WTC11 (cell line): ENCODE measurements at regions of chr1 and their contacts with region 1.

Region 1: GRCh38 chr1:156060937-156061636 is at the start of gene RAB25:
- DNase-seq: peak; percentile 80
- ATAC-seq: peak; percentile 83
- H3K4me3 Mint-ChIP-seq: peak within 1 kb of the TSS; percentile 90
- H3K27ac Mint-ChIP-seq: peak within 1 kb of the TSS; percentile 98
- H3K4me1 Mint-ChIP-seq: peaks cover 37% of the 10 kb centered on the region
- H3K27me3 Mint-ChIP-seq: no peaks in the 10 kb centered on the region
- CTCF ChIP-seq: no peak
- total RNA-seq, gene RAB25: 61.9 to 82.8 TPM (median 82.5 TPM) in 3 replicates

Region 2: GRCh38 chr1:155920717-155921116 is 140.4 kb before region 1 on chr1:
- CTCF ChIA-PET with region 1: no interaction called
- POLR2A ChIA-PET with region 1: no interaction called
- DNase-seq: no peak
- ATAC-seq: no peak
- H3K4me3 Mint-ChIP-seq: no peak overlapping the region
- H3K27ac Mint-ChIP-seq: no peak overlapping the region
- H3K4me1 Mint-ChIP-seq: no peaks in the 10 kb centered on the region
- H3K27me3 Mint-ChIP-seq: no peaks in the 10 kb centered on the region
- CTCF ChIP-seq: no peak

Region 3: GRCh38 chr1:155978325-155978972 is 82.6 kb before region 1 on chr1 and contains the start of gene ARHGEF2:
- CTCF ChIA-PET with region 1: interaction called, 73 read pairs
- POLR2A ChIA-PET with region 1: interaction called, 10 read pairs
- DNase-seq: peak; percentile 91
- ATAC-seq: peak; percentile 75
- H3K4me3 Mint-ChIP-seq: peak within 1 kb of the TSS; percentile 95
- H3K27ac Mint-ChIP-seq: peak within 1 kb of the TSS; percentile 95
- H3K4me1 Mint-ChIP-seq: peaks cover 78% of the 10 kb centered on the region
- H3K27me3 Mint-ChIP-seq: no peaks in the 10 kb centered on the region
- CTCF ChIP-seq: no peak
- total RNA-seq, gene ARHGEF2: 60.0 to 69.5 TPM (median 66.2 TPM) in 3 replicates

Region 4: DNA sequence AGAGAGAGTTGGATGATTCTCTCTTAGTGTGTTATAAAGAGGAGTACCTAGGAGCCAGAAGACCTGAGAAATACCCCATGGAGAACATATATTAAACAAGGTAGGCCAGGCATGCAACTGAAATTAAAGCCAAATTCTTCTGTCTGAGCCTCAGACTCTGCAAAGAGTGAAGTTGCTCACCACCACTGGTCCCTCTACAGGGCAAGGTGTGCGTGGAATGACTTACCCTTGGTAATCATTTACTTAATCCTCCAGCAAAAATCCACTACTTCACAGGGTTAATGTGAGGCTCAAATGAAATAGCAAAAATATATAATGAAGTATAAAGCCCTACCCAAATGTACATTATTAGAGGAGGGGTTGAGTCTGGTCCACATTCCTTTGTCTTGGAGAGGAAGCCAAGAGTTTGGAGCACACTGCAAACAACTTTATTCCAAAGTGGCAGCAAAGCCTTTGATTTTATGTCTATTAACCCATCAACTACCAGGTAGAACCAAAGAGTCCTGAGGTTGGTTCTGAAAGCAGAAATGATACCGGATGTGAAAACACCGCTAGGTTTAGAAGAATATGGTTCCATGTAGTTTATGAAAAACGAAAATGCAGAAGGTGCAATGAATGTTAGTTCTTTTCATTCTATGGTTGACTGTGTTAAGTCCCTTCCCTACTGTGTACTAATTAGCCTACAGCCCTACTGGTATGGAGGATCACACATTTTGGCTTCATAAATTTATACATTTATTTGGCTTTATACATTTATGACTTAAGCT is 48.9 kb before region 1 on chr1:
- CTCF ChIA-PET with region 1: interaction called, 24 read pairs
- POLR2A ChIA-PET with region 1: no interaction called
- DNase-seq: no peak
- ATAC-seq: no peak
- H3K4me3 Mint-ChIP-seq: no peak overlapping the region
- H3K27ac Mint-ChIP-seq: no peak overlapping the region
- H3K4me1 Mint-ChIP-seq: no peaks in the 10 kb centered on the region
- H3K27me3 Mint-ChIP-seq: no peaks in the 10 kb centered on the region
- CTCF ChIP-seq: no peak

Region 5: DNA sequence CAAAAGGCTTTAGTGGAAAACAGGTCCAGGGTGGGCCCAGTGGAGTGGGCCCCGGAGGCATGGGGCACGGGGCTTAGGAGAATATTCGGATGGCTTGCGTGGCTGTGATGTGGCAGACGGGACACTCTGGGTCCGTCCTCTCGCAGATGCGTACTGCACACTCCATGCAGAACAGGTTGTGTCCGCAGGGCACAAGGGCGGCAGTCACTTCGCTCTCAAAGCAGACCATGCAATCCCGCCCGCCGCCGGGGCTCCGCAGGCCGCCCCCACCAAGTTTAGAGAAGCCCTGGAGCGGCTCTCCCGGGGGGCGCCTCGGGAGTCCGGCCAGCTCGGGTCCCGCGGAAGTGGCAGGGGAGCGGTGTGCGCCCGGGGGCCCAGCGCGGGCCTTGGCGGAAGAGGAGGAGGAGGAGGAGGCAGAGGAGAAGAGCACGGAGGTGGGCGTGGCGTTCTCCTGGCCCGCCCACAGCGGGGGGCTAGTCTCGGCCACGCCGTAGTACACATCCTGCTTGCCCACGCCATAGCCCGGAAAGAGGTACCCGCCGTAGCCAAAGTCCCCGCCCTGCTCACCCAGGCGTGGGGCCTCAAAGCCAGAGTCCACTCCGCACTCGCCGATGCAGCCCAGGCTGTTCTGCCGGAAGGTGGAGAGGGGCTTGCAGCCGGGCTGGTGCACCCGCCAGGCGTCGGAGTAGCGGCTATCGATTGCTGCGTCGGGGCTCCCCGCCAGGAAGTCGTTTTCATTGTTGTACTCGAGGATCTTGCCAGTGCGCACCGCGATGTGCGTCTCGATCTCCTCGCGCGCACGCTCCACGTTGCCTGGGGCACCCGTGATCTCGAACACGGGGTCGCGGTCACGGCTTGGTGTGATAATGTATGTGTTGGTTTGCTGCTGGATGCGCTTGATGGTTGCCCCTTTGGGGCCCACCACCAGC is 15.7 kb after region 1 on chr1:
- CTCF ChIA-PET with region 1: interaction called, 23 read pairs
- POLR2A ChIA-PET with region 1: interaction called, 17 read pairs
- DNase-seq: peak; percentile 65
- ATAC-seq: peak; percentile 21
- H3K4me3 Mint-ChIP-seq: peak overlapping the region; percentile 96
- H3K27ac Mint-ChIP-seq: peak overlapping the region; percentile 53
- H3K4me1 Mint-ChIP-seq: peaks cover 80% of the 10 kb centered on the region
- H3K27me3 Mint-ChIP-seq: no peaks in the 10 kb centered on the region
- CTCF ChIP-seq: no peak

Region 6: GRCh38 chr1:156129706-156130581 is 68.9 kb after region 1 on chr1:
- CTCF ChIA-PET with region 1: interaction called, 11 read pairs
- POLR2A ChIA-PET with region 1: interaction called, 4 read pairs
- DNase-seq: peak; percentile 94
- ATAC-seq: peak; percentile 92
- H3K4me3 Mint-ChIP-seq: no peak overlapping the region
- H3K27ac Mint-ChIP-seq: peak overlapping the region; percentile 96
- H3K4me1 Mint-ChIP-seq: peaks cover 29% of the 10 kb centered on the region
- H3K27me3 Mint-ChIP-seq: no peaks in the 10 kb centered on the region; the same call in 1 of the 2 replicates
- CTCF ChIP-seq: peak; percentile 93